AG04449 (cell line): ENCODE measurements at regions of chr22 and their contacts with region 1.

Region 1: DNA sequence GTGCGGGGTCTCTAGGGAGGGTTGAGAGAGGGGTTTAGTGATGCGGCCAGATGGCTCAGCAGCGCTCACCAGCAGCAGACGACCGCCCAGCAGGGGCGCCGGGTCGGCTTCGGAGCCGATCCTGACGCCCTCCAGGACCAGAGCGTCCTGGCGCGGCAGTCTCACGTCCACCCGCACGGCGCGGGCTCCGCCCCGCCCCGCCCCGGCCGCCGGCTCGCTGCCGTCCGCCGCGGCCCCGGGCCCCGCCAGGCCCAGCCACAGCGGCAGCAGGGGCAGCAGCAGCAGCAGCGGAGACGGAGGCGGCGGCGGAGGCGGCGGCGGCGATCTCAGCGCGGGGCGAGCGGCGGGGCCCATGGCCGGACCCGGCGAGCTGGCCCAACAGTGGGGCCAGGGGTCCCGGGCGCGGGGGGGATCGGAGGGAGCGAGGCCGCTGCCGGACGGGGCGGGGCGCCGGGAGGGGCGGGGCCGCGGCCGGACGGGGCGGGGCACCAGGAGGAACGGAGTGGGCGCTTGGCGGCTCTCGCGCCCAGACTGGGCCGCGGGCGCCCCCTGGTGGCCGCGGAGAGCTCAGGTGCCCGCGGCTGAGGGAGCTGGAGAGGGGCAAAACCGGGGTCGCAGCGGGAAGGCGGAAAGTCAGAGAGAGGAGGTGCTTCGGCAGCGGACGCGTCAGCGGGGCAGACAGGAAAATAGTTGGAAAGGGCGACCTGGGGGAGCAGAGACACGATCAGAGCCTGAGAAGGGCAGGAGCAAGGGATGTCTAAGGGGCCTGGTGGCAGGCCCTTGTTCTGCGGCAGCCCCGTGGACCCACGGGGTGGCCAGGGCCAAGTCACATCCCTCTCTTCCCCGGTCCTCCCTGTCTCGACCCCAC is at the start of gene RNF215:
- DNase-seq: no peak
- H3K4me3 ChIP-seq: peak within 1 kb of the TSS; percentile 73
- CTCF ChIP-seq: peak; percentile 91

Region 2: DNA sequence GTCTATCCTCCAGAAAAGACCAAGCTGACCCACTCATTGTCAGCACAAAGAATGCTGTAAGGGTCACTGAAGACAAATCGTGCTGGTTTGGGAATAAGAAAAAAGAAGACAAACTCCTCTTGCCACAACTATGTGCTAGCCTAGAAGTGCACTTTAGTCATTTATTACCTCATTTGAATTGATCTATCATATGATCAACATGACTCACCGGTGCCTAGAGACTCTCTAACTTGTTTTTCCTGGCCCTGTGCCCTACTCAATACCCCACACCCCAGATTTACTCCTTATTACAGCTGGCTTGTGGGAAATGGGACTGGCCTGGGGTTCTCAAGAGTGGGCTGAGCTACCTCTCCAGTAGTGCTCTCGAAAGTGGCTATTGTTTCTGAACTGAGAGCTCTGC is 342.8 kb before region 1 on chr22:
- CTCF ChIA-PET with region 1: no interaction called
- POLR2A ChIA-PET with region 1: no interaction called
- DNase-seq: peak; percentile 72
- H3K4me3 ChIP-seq: no peak overlapping the region
- CTCF ChIP-seq: no peak

Region 3: GRCh38 chr22:30262917-30263741 is 124.1 kb before region 1 on chr22:
- CTCF ChIA-PET with region 1: interaction called, 66 read pairs
- POLR2A ChIA-PET with region 1: no interaction called
- DNase-seq: no peak
- H3K4me3 ChIP-seq: peak overlapping the region; percentile 12
- CTCF ChIP-seq: peak; percentile 93

Region 4: GRCh38 chr22:30368431-30368830 is 18.8 kb before region 1 on chr22:
- CTCF ChIA-PET with region 1: interaction called, 18 read pairs
- POLR2A ChIA-PET with region 1: no interaction called
- DNase-seq: no peak
- H3K4me3 ChIP-seq: no peak overlapping the region
- CTCF ChIP-seq: no peak

Region 5: GRCh38 chr22:30413745-30414524 is 26.7 kb after region 1 on chr22:
- CTCF ChIA-PET with region 1: interaction called, 129 read pairs
- POLR2A ChIA-PET with region 1: no interaction called
- DNase-seq: no peak
- H3K4me3 ChIP-seq: no peak overlapping the region
- CTCF ChIP-seq: no peak

Region 6: DNA sequence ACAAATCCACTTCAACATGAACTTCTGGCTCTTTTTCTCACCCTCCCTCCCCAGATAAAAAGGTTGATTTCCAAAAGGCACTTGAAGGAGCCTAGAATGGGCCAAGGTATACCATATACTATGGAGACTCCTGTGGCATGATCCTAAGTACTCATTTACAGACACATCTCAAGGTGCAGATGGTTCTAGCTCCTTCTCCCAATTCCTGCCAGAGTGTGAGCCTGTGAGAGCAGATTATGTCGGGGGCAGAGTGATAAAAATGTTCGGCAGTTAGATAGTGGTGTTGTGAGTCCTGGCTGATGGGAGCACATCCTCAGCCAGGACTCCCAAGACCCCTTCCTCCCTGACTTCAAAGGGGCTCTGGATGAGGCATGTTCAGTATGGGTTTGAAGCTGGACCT is 92.8 kb after region 1 on chr22:
- CTCF ChIA-PET with region 1: interaction called, 192 read pairs
- POLR2A ChIA-PET with region 1: no interaction called
- DNase-seq: no peak
- H3K4me3 ChIP-seq: no peak overlapping the region
- CTCF ChIP-seq: no peak